ENCODE measurements at regions of chr14 and their contacts with region 1.

Region 1: DNA sequence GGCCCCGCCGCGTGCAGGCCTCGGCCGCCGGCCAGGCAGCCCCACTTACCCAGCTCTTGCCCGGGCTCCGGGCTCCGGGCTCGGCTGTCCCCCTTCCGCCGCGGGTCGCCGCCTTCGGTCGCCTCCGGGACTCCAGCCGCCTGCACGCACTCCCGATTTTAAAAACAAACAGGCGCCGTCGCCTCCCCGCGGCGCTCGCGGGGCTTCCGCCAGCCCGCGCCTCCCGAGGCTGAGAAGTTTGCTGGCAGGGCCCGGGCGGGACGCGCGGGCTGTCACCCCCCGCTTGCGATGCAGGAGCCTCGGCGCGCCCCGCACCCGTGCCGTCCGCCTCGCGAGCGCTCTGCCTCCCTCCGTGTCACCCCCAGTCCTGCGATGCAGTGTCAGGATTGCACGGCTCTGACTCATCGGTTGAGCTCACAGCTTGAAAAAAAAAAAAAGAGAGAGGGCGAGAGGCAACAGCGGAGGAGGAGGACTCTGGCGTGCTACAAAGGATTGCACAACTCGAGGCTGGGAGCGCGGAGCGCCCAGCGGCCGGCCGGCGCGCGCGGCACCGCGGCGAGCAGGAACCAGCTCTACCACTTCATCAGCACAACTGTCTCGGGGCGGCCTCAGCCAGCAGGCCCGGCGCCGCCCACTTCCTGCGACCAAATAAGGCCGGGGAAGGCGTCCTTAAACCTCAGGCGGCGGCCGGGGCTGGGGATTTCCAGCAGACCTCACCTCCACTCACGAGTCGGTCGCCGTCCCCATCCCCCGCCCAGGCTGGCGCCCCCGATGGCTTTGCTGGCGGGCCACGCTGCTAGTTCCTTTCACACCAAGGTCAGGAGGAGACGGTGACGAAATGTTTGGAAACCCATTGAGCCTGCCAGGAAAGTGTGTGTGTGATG is 45.8 kb upstream of the PNMA1 start:
- DNase-seq: peak; percentile 97
- H3K4me3 Mint-ChIP-seq: peak overlapping the region; percentile 84
- H3K27ac Mint-ChIP-seq: peak overlapping the region; percentile 99
- H3K4me1 Mint-ChIP-seq: peaks cover 74% of the 10 kb centered on the region
- H3K27me3 Mint-ChIP-seq: no peaks in the 10 kb centered on the region

Region 2: DNA sequence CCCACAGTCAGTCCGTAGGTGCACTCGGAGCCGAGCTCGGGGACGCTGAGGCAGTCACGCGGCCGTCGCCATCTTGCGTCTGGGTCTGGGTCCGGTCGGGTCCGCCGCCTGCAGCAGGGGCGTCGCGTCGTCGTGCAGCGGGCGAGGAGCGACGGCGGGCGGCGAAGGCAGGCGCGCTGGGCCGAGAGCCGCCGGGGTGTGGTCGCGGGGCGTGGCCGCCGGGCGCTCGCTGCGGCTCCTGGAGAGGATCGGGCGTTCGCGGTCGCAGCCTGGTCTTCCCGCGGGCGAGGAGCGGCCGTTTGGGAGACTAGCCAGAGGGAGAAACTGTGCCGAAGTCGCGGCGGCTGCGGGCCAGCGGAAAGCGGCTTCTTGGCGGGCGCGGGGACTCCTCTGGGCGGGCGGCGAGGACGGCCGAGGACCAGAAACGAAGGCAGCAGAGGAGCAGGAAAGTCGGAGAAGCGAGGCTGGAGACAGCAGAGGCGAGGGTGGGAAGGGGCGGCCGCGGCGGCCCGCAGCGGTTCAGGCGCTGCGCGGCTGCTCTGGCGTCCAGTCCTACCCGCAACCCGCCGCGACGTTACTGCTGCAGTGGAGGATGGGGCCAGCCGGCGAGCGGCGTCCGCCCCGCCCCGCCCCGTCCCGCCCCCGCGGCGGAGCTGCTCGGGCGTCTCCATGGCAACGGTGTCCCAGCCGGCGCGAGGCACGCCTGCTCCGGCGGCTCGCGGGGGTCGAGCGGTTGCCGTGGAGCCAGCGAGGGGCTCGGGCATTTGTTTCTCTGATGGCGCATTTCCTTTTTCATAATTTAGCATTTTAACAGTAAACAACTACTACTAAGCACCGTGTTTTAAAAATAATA is 45.9 kb before region 1 on chr14 and contains the start of gene PNMA1:
- CTCF ChIA-PET with region 1: interaction called, 4 read pairs
- POLR2A ChIA-PET with region 1: interaction called, 7 read pairs
- intact Hi-C with region 1: loop called (anchors 1 kb)
- DNase-seq: peak; percentile 90
- H3K4me3 Mint-ChIP-seq: peak within 1 kb of the TSS; percentile 89
- H3K27ac Mint-ChIP-seq: peak within 1 kb of the TSS; percentile 93
- H3K4me1 Mint-ChIP-seq: peaks cover 13% of the 10 kb centered on the region
- H3K27me3 Mint-ChIP-seq: no peaks in the 10 kb centered on the region
- total RNA-seq, gene PNMA1: 28.2 to 28.3 TPM

Region 3: DNA sequence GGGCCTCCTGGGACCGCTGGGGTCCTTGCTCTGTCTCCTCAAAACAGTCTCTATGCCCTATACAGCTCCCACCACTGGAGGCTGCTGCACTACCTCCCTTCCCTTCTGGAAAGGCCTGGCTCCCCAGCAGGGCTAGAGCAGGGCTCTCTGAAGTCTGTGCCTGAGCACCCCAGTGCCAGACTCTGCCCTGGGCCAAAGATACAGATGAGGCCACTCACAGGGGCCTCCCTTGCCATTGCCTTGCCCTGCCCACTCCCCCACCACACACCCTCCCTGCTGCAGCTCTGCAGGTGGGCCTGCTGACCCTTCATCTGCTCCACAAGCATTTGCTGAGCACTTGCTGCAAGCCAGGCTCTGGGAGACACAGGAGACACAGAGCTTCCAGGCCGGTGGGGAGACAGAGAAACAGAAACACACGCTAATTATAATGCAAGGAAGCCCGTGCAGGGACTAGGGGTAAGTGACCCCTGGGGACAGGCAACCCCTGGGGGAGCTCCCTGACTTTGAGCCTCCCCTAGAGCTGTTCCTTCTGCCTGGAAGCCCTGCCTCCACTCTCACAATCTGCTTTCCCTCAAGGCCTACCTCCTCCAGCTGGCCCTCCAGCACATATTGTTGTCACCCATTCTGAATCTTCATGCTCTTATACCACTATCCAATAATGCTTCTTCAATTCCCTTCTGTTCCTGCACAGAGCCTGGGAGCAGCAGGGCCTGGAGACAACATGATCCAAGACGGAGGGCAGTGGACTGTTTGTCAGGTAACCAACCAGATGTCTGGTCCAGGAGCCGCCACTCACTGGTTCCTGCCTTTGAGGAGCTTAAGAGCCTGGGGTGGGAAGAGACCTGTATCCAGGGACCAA is 13.2 kb before region 1 on chr14:
- CTCF ChIA-PET with region 1: interaction called, 56 read pairs
- POLR2A ChIA-PET with region 1: interaction called, 56 read pairs
- intact Hi-C with region 1: loop called (anchors 1 kb)
- DNase-seq: no peak
- H3K4me3 Mint-ChIP-seq: no peak overlapping the region
- H3K27ac Mint-ChIP-seq: peak overlapping the region; percentile 51
- H3K4me1 Mint-ChIP-seq: peaks cover 95% of the 10 kb centered on the region
- H3K27me3 Mint-ChIP-seq: no peaks in the 10 kb centered on the region

Region 4: GRCh38 chr14:73785873-73786695 is 26.1 kb after region 1 on chr14:
- CTCF ChIA-PET with region 1: interaction called, 55 read pairs
- POLR2A ChIA-PET with region 1: interaction called, 211 read pairs
- intact Hi-C with region 1: loop called (anchors 1 kb)
- DNase-seq: peak; percentile 80
- H3K4me3 Mint-ChIP-seq: peak overlapping the region; percentile 90
- H3K27ac Mint-ChIP-seq: peak overlapping the region; percentile 93
- H3K4me1 Mint-ChIP-seq: peaks cover 56% of the 10 kb centered on the region
- H3K27me3 Mint-ChIP-seq: no peaks in the 10 kb centered on the region

Region 5: DNA sequence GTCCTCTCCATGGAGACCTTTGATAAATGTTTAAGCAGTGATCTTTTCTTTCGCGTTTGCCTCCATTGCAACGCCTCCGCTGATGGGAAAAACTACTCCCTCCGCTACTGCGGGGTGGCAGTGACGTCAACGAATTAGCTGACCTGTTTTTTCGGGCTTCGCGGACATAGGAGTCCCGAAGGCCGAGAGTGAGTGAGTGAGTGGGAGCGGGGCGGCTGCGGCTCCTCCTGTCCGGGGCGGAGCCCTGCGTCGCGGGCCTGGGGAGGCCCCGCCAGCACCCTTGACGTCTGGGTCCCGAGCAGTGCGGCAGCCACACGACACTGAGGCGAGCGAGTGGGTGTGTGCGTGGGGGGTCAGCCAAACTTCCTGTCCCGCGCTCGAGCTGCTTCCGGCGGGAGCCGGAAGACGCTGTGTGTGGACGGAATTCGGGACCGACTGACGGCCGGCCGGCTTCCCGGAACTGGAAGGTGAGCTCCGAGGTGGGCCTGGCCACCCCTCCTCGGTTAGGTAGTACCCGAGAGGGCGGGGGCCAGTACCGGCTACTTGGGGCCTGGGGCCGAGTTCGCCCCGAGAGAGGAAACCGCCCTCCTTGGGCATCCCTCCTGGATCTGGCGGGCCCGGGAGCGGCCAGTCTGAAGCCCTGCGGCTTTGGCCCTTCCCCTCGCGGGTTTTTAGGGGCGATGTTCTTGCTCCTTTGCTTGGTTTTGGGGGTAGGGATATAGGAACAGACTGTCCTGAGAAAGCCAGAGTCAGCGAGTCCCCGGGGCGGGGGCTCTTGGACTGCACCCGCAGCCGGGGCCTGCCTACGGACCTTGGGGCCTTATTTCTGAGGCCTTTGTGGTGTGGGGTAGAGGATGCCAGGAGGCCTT is 126.7 kb after region 1 on chr14 and contains the start of gene ZNF410:
- CTCF ChIA-PET with region 1: interaction called, 10 read pairs
- POLR2A ChIA-PET with region 1: interaction called, 17 read pairs
- intact Hi-C with region 1: loop called (anchors 2 kb)
- DNase-seq: peak; percentile 97
- H3K4me3 Mint-ChIP-seq: peak within 1 kb of the TSS; percentile 93
- H3K27ac Mint-ChIP-seq: peak within 1 kb of the TSS; percentile 95
- H3K4me1 Mint-ChIP-seq: peaks cover 47% of the 10 kb centered on the region
- H3K27me3 Mint-ChIP-seq: no peaks in the 10 kb centered on the region
- total RNA-seq, gene ZNF410: 65.2 to 68.7 TPM

Region 6: DNA sequence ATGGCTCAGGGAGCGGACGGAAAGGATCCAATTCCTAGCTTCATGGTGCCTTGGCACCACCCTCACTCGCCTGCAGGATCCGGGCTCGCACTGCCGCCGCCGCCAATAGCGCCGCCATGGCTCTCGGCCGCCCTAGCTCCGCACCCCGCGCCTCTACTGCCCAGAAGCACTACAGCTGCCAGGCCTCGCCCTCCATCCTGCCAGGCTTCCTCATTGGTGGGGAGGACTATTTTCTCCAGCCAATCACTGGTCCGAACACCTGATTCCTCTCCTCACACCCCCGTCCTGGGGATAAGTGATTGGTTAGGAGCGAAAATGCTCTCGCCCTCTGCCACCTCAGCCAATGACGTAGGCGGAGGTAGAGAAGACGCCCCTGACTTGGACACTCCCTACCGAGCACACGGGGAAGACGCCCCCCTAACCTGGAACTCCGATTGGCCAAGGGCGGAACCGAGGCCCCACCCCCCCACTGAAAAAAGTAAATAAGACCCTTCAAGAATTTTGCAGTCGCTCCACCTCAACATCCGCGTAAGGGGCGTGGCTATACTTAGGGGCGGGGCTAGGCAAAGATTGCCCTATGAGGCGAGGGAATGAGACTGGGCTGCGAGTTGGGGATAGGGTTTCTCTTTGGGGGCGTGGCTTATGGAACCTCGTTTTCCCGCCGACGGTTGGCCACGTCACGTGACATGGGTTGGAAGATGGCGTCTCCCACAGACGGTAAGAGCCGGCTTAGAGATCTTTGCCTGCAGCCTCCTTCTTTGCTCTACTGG is 324.5 kb after region 1 on chr14 and contains the starts of genes ALDH6A1 and LIN52:
- CTCF ChIA-PET with region 1: no interaction called
- POLR2A ChIA-PET with region 1: no interaction called
- intact Hi-C with region 1: loop called (anchors 10 kb)
- DNase-seq: peak; percentile 100
- H3K4me3 Mint-ChIP-seq: peak within 1 kb of the TSS; percentile 100
- H3K27ac Mint-ChIP-seq: peak within 1 kb of the TSS; percentile 98
- H3K4me1 Mint-ChIP-seq: peaks cover 39% of the 10 kb centered on the region
- H3K27me3 Mint-ChIP-seq: no peaks in the 10 kb centered on the region
- total RNA-seq, gene ALDH6A1: 25.0 to 25.7 TPM
- total RNA-seq, gene LIN52: 13.5 to 14.4 TPM

Measured in activated CD4-positive, alpha-beta memory T cell treated with anti-CD3 and anti-CD28 coated beads for 36 hours (primary cell).